ENCODE measurements at regions of chr10 and their contacts with region 1.

Region 1: GRCh38 chr10:73096449-73097304 is at the start of gene P4HA1:
- DNase-seq: peak; percentile 97
- H3K4me3 Mint-ChIP-seq: peak within 1 kb of the TSS; percentile 84
- H3K27ac Mint-ChIP-seq: peak within 1 kb of the TSS; percentile 95
- H3K4me1 Mint-ChIP-seq: peaks cover 33% of the 10 kb centered on the region
- H3K27me3 Mint-ChIP-seq: no peaks in the 10 kb centered on the region
- total RNA-seq, gene P4HA1: 31.4 to 32.9 TPM

Region 2: GRCh38 chr10:72093450-72093849 is 1003.2 kb before region 1 on chr10:
- CTCF ChIA-PET with region 1: no interaction called
- POLR2A ChIA-PET with region 1: interaction called, 10 read pairs
- DNase-seq: no peak
- H3K4me3 Mint-ChIP-seq: no peak overlapping the region
- H3K27ac Mint-ChIP-seq: no peak overlapping the region
- H3K4me1 Mint-ChIP-seq: peaks cover 52% of the 10 kb centered on the region
- H3K27me3 Mint-ChIP-seq: no peaks in the 10 kb centered on the region

Region 3: DNA sequence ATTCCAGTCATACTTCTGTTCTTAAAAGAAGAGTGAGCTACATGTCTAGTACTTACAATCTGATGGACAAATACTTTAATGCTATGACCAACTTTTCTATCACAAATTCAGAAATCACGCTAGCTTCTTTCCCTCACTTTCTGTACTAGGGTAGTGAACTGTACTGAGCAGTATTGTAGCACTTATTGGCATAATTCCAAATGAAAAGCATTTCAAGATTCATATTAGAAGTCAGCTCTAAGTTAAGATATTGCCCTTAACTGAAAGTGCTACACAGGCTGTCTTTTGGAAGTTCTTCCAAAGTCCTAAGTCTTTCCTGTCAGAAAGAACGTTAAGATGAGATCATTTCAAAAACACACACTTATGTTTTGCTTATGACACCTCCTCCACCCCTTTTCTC is 13.5 kb before region 1 on chr10:
- CTCF ChIA-PET with region 1: interaction called, 18 read pairs
- POLR2A ChIA-PET with region 1: interaction called, 5 read pairs
- DNase-seq: no peak
- H3K4me3 Mint-ChIP-seq: no peak overlapping the region
- H3K27ac Mint-ChIP-seq: no peak overlapping the region
- H3K4me1 Mint-ChIP-seq: peaks cover 6% of the 10 kb centered on the region
- H3K27me3 Mint-ChIP-seq: no peaks in the 10 kb centered on the region

Region 4: GRCh38 chr10:73182568-73182967 is 85.9 kb after region 1 on chr10:
- CTCF ChIA-PET with region 1: no interaction called
- POLR2A ChIA-PET with region 1: no interaction called
- DNase-seq: no peak
- H3K4me3 Mint-ChIP-seq: no peak overlapping the region
- H3K27ac Mint-ChIP-seq: no peak overlapping the region
- H3K4me1 Mint-ChIP-seq: no peaks in the 10 kb centered on the region
- H3K27me3 Mint-ChIP-seq: no peaks in the 10 kb centered on the region

Region 5: DNA sequence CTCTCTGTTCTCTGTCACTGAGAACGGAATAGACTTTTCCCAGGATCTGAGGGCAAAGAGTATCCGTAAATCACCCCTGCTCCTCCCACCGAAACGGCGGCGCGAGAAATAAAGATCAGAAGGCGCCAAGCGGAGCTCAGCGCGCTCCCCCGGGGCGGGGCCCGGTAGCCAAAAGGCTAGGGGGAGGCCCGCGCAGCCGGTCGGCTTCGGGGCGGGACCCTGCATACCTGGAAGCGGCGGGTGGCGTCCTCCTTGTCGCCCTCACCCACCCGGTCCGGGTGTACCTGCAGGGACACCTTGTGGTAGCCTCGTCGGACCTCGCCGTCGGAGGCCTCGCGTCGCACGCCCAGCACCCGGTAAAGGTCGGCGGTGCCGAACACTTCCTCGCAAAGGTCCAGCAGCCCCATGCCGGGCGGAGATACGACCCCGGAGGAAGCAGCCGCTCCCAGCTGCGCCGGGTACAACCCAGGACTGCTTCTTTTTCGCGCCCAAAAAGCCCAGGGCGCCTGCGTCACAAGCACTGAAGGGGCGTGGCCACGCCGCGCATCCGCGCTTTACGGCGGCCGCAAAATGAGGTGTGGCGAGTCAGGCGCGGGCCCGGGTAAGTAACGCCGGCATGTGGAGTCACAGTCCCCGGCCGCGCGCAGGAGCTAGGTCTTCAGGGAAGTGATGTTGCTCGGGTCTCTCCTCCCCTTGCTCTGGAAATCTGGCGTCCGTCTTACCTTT is 150.3 kb after region 1 on chr10 and contains the start of gene DNAJC9:
- CTCF ChIA-PET with region 1: no interaction called
- POLR2A ChIA-PET with region 1: interaction called, 10 read pairs
- DNase-seq: peak; percentile 97
- H3K4me3 Mint-ChIP-seq: peak within 1 kb of the TSS; percentile 100
- H3K27ac Mint-ChIP-seq: peak within 1 kb of the TSS; percentile 98
- H3K4me1 Mint-ChIP-seq: peaks cover 78% of the 10 kb centered on the region
- H3K27me3 Mint-ChIP-seq: no peaks in the 10 kb centered on the region
- total RNA-seq, gene DNAJC9: 54.8 to 63.6 TPM